Caco-2 (cell line): ENCODE measurements at regions of chr2 and their contacts with region 1.

Region 1: GRCh38 chr2:168246483-168247340 is 683 bp downstream of the STK39 start:
- DNase-seq: peak; percentile 46 to 63
- H3K4me3 ChIP-seq: peak overlapping the region; percentile 58
- H3K4me3 Mint-ChIP-seq: peak overlapping the region; percentile 71
- H3K27ac Mint-ChIP-seq: no peak overlapping the region
- H3K4me1 ChIP-seq: peaks cover 11% of the 10 kb centered on the region; the same call in 1 of the 2 replicates
- H3K4me1 Mint-ChIP-seq: no peaks in the 10 kb centered on the region
- H3K27me3 ChIP-seq: no peaks in the 10 kb centered on the region
- H3K27me3 Mint-ChIP-seq: peaks cover 9% of the 10 kb centered on the region
- CTCF ChIP-seq: no peak

Region 2: DNA sequence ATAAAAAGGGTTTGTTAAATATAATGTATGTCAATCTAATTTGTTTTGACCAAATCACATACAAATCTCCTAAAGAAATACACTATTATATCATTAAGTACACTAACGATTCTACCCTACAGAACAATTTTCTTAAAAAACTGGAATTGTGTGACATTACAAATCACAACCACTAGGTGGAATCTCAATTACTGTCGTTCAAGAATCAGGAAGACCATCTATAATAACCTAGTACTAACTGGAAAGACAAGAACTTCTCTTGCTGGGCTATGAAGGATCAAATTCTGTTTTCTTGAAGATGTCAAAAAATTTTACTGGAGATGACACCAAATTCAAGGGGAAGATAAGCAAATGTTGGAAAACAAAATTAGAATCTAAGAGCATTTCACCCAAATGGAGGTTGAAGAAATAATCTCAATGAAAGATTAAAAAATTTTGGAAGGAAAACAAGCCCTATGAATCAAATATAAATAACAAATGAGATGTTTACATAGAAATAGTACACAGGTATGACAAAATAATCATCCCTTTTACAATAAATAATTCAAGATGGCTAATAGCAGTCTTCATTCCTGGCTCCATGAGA is 110.2 kb before region 1 on chr2:
- CTCF ChIA-PET with region 1: no interaction called
- POLR2A ChIA-PET with region 1: no interaction called
- intact Hi-C with region 1: loop called (anchors 1 kb)
- DNase-seq: peak in 1 of 2 experiments; percentile 24
- H3K4me3 ChIP-seq: no peak overlapping the region
- H3K4me3 Mint-ChIP-seq: no peak overlapping the region
- H3K27ac Mint-ChIP-seq: no peak overlapping the region
- H3K4me1 ChIP-seq: no peaks in the 10 kb centered on the region
- H3K4me1 Mint-ChIP-seq: no peaks in the 10 kb centered on the region
- H3K27me3 ChIP-seq: no peaks in the 10 kb centered on the region
- H3K27me3 Mint-ChIP-seq: no peaks in the 10 kb centered on the region
- CTCF ChIP-seq: peak; percentile 51 to 52

Region 3: GRCh38 chr2:168160897-168161296 is 85.8 kb before region 1 on chr2:
- CTCF ChIA-PET with region 1: no interaction called
- POLR2A ChIA-PET with region 1: no interaction called
- intact Hi-C with region 1: loop called (anchors 1 kb)
- DNase-seq: peak in 1 of 2 experiments; percentile 54
- H3K4me3 ChIP-seq: no peak overlapping the region
- H3K4me3 Mint-ChIP-seq: no peak overlapping the region
- H3K27ac Mint-ChIP-seq: no peak overlapping the region
- H3K4me1 ChIP-seq: no peaks in the 10 kb centered on the region
- H3K4me1 Mint-ChIP-seq: no peaks in the 10 kb centered on the region
- H3K27me3 ChIP-seq: no peaks in the 10 kb centered on the region
- H3K27me3 Mint-ChIP-seq: no peaks in the 10 kb centered on the region
- CTCF ChIP-seq: peak; percentile 53 to 59

Region 4: DNA sequence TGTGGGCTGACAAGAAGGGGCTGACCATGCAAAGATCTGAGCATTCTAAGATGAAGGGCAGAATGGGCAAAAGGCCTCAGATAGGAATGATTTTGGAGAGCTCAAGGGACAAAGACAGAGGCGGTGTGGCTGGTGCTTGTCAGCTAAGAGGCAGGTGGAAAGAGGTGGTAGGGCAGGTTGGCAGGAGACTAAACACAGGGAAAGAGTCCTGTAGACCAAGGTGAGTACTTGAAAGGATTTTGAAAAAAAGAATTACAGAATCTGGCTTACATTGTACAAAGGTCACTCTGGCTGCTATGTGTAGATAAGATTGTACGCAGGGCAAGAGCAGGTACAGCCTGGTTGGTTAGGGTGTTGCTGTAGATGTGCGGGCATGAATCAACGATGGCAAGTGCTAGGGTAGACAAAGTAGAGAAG is 49.9 kb before region 1 on chr2:
- CTCF ChIA-PET with region 1: no interaction called
- POLR2A ChIA-PET with region 1: no interaction called
- intact Hi-C with region 1: loop called (anchors 2 kb)
- DNase-seq: peak; percentile 41 to 55
- H3K4me3 ChIP-seq: no peak overlapping the region
- H3K4me3 Mint-ChIP-seq: peak overlapping the region; percentile 8
- H3K27ac Mint-ChIP-seq: peak overlapping the region; percentile 71
- H3K4me1 ChIP-seq: peaks cover 20% of the 10 kb centered on the region
- H3K4me1 Mint-ChIP-seq: peaks cover 30% of the 10 kb centered on the region
- H3K27me3 ChIP-seq: no peaks in the 10 kb centered on the region
- H3K27me3 Mint-ChIP-seq: no peaks in the 10 kb centered on the region
- CTCF ChIP-seq: no peak

Region 5: DNA sequence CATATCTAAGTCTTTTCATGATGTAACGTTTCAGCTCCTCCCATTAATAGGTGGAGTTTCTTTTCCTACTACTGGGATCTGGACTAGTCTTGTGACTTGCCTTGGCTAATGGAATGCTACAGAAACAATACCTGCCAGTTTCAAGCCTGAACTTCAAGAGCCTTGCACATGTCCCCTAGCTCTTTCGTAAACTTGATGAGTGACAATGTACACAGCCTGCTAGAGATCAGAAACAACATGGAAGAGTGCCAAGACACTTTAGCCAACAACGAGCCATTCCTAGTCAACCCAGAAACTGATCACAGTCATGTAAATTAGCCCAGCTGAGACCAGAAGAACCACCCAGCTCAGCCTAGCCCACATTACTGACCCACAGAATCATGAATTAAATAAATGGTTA is 25.5 kb after region 1 on chr2:
- CTCF ChIA-PET with region 1: no interaction called
- POLR2A ChIA-PET with region 1: no interaction called
- intact Hi-C with region 1: no loop called
- DNase-seq: peak in 1 of 2 experiments; percentile 26
- H3K4me3 ChIP-seq: no peak overlapping the region
- H3K4me3 Mint-ChIP-seq: no peak overlapping the region
- H3K27ac Mint-ChIP-seq: no peak overlapping the region
- H3K4me1 ChIP-seq: no peaks in the 10 kb centered on the region
- H3K4me1 Mint-ChIP-seq: no peaks in the 10 kb centered on the region
- H3K27me3 ChIP-seq: no peaks in the 10 kb centered on the region
- H3K27me3 Mint-ChIP-seq: peaks cover 4% of the 10 kb centered on the region
- CTCF ChIP-seq: no peak

Region 6: GRCh38 chr2:168336864-168337263 is 90.2 kb after region 1 on chr2:
- CTCF ChIA-PET with region 1: interaction called, 5 read pairs
- POLR2A ChIA-PET with region 1: no interaction called
- intact Hi-C with region 1: loop called (anchors 1 kb)
- DNase-seq: peak; percentile 72 to 77
- H3K4me3 ChIP-seq: no peak overlapping the region
- H3K4me3 Mint-ChIP-seq: no peak overlapping the region
- H3K27ac Mint-ChIP-seq: no peak overlapping the region
- H3K4me1 ChIP-seq: no peaks in the 10 kb centered on the region
- H3K4me1 Mint-ChIP-seq: no peaks in the 10 kb centered on the region
- H3K27me3 ChIP-seq: no peaks in the 10 kb centered on the region
- H3K27me3 Mint-ChIP-seq: peaks cover 3% of the 10 kb centered on the region
- CTCF ChIP-seq: peak; percentile 56 to 82